H1 (cell line): ENCODE measurements at regions of chr15 and their contacts with region 1.

Region 1: DNA sequence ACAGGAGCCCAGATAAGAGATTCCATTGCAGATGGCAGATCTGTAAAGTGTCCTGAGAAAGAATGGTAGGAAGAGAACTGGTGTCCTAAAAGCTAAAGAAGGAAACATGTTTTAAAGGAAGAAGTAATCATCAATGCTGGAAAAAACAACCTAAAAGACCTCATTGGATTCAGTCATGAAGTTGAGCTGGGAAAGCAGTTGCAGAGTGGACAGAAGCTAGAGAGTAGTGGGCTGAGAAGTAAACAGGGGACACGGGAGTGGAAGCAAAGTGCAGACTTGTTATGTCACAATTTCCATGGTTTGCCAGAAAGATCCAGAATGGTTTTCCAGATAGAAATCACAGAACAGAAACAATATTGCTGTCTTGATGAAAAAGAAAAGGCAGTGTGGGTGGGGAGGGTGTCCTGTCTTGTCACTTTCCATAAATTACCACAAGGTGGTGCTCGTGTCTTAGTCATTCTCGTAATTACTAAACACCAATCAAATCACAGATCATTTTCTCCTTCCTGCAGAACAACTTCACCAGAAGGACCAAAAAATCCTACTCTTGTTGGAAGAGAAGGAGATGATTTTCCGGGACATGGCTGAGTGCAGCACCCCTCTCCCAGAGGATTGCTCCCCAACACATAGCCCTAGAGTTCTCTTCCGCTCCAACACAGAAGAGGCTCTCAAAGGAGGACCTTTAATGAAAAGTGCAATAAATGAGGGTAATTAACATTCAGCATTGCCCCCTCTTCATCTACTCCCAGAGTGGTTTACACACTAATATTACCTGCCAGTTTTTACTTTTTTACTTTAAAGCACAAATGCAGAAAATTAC is 64.5 kb downstream of the KLHL25 start:
- DNase-seq: no peak
- H3K4me3 ChIP-seq: no peak overlapping the region
- H3K27ac ChIP-seq: no peak overlapping the region
- H3K4me1 ChIP-seq: no peaks in the 10 kb centered on the region
- H3K27me3 ChIP-seq: no peaks in the 10 kb centered on the region
- CTCF ChIP-seq: peak in 2 of 3 experiments; percentile 53 to 74; a peak in 2 of 4 replicates
- EP300 ChIP-seq: no peak
- POLR2A ChIP-seq: no peak
- RAD21 ChIP-seq: peak; percentile 82 to 88

Region 2: DNA sequence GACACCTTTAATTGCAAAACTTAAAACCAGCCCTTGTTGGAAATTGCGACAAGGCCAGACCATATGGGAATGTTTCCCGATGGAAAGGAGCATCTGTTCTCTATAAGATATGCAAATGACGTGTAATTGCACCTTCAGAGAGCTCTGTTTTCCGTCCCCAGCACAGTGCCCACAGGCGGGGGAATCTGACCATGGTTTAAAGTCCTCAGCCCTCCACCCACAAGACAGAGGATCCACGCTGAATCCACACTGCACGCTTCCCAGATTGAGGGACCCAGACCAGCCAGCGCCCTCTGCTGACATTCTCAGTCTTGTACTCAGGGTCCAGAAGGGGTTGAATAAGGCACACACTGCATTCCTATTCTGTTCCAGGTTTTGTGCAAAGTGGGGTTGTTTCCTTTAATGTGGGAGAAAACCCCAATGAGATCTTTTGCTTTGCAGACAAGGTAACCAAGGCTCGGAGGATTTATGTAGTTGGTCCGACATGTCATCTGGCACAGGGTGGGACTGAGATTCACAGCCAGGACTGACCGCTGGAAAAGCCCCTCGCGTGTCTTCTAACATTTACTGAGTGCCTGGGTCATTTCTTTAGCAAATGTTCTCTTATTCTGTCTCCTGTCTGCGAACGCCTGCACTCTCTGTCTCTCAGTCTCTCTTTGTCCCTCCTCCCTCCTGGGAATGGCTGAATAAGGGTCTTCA is 101.4 kb after region 1 on chr15:
- CTCF ChIA-PET with region 1: interaction called, 20 read pairs
- POLR2A ChIA-PET with region 1: no interaction called
- DNase-seq: peak in 1 of 2 experiments; percentile 71
- H3K4me3 ChIP-seq: no peak overlapping the region
- H3K27ac ChIP-seq: no peak overlapping the region
- H3K4me1 ChIP-seq: no peaks in the 10 kb centered on the region
- H3K27me3 ChIP-seq: 0 out of 7 replicates have a peak, but pooled peaks cover 0 to 2% (median 0%) of the 10 kb centered on the region in 4 experiments
- CTCF ChIP-seq: peak; percentile 73 to 80 (median 77)
- EP300 ChIP-seq: no peak
- POLR2A ChIP-seq: no peak
- RAD21 ChIP-seq: peak; percentile 74 to 79

Region 3: GRCh38 chr15:85840065-85840801 is 110.0 kb after region 1 on chr15:
- CTCF ChIA-PET with region 1: interaction called, 25 read pairs
- POLR2A ChIA-PET with region 1: no interaction called
- DNase-seq: peak; percentile 73 to 95
- H3K4me3 ChIP-seq: peak overlapping the region in 3 of 4 experiments; percentile 14 to 51 (median 30); a peak in 5 of 8 replicates
- H3K27ac ChIP-seq: no peak overlapping the region
- H3K4me1 ChIP-seq: peaks cover 0 to 4% (median 1%) of the 10 kb centered on the region in 4 experiments; a peak in 2 of 7 replicates
- H3K27me3 ChIP-seq: peaks cover 0 to 8% (median 3%) of the 10 kb centered on the region in 4 experiments; a peak in 3 of 7 replicates
- CTCF ChIP-seq: peak; percentile 78 to 96 (median 92)
- EP300 ChIP-seq: 0 out of 3 replicates have a peak, but pooled peaks of 1 of the 2 experiments have one; percentile 9
- POLR2A ChIP-seq: no peak
- RAD21 ChIP-seq: peak; percentile 70 to 79